Activated CD4-positive, alpha-beta memory T cell treated with anti-CD3 and anti-CD28 coated beads for 36 hours (primary cell): ENCODE measurements at regions of chr6 and their contacts with region 1.

Region 1: DNA sequence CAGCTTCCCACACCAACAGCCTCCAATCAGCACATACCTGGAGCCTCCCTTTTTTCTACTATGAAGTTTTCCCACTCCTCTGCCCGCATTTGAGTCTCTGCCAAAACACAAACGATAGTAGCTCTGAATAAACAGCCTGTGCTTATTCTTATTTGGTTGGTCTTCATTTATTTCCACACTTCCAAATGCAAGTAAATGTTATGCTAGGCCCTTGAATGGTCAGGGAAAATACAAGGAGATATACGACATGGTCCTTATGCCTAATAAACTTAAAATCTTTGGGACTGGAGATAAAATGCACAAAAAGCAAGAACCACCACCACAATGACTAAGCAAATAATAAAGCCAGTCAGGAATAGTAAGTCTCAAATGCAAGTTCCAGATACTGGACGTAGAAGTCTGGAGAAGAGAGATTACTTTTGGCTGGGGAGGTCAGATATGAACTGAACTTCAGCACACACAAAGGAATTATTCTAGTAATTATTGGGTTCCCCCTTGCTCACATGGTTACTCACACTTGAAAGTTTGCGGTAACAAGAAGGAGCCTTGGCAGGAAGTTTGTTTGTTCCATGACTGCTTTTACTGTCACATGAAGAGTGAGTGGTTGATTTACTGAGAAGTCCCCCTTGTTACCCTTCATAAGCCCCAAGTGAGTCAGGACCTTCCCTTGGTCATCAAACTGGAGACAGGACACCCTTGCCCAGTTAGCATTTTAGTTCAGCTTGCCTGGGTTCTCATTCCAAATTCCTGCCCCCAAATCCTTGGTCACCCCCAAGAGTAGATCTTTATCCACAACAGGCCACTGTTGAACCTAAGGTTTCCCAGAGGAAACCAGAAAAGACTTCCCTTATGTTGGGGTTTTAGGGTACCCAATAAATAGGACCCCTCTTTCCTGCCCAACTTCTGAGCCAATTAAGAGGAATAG is 511.2 kb upstream of the JARID2 start:
- DNase-seq: peak; percentile 67
- H3K4me3 Mint-ChIP-seq: peak overlapping the region; percentile 73
- H3K27ac Mint-ChIP-seq: peak overlapping the region; percentile 100
- H3K4me1 Mint-ChIP-seq: peaks cover 98% of the 10 kb centered on the region
- H3K27me3 Mint-ChIP-seq: no peaks in the 10 kb centered on the region

Region 2: DNA sequence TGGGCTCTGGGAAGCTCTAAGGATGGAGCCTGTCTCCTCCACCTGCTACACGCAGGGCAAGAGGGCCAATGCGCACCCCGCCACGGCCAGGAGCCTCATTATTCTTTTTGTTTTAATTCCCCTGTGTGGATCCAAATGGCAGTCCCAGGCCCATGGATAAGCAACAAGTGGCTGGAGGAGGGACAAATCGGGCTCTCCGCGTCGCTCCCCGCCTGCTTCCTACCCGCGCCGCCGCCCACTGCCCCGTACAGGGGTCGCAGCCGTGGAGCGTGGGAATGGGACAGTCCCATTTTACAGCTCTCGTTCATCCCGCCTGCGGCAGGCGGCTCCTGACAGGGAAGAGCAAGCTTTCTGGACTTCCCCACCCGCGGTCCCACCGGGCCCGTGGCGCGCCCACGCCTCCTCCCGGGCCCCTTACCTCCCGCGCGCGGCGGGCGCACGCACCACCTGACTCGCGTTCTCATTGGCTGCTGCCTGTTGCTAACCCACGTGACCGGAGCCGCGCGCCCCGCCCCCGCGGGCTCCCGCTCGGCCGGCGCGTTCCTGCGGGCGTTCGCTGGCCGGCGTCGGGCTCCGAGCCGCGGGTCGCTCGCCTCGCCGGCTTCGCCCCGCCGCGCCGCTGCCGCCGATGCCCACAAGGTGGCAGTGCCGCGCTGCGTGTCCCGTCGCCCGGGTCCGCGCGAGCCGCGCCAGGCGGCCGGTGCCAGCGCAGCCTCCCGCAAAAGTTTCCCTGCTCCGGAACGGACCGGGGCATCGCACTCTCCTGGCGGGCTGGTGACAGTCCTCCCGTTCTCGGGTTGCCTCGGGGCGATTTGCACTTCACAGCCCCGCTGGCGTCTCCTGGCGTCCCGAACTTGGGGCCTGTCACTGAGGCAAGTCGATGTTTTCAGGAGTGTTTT is 523.8 kb before region 1 on chr6:
- CTCF ChIA-PET with region 1: no interaction called
- POLR2A ChIA-PET with region 1: no interaction called
- intact Hi-C with region 1: loop called (anchors 1 kb)
- DNase-seq: peak; percentile 94
- H3K4me3 Mint-ChIP-seq: peak overlapping the region; percentile 74
- H3K27ac Mint-ChIP-seq: peak overlapping the region; percentile 85
- H3K4me1 Mint-ChIP-seq: peaks cover 17% of the 10 kb centered on the region
- H3K27me3 Mint-ChIP-seq: no peaks in the 10 kb centered on the region

Region 3: GRCh38 chr6:14542670-14543366 is 191.9 kb before region 1 on chr6:
- CTCF ChIA-PET with region 1: interaction called, 4 read pairs
- POLR2A ChIA-PET with region 1: no interaction called
- intact Hi-C with region 1: loop called (anchors 2 kb)
- DNase-seq: peak; percentile 90
- H3K4me3 Mint-ChIP-seq: no peak overlapping the region
- H3K27ac Mint-ChIP-seq: peak overlapping the region; percentile 53
- H3K4me1 Mint-ChIP-seq: peaks cover 31% of the 10 kb centered on the region
- H3K27me3 Mint-ChIP-seq: peaks cover 2% of the 10 kb centered on the region

Region 4: DNA sequence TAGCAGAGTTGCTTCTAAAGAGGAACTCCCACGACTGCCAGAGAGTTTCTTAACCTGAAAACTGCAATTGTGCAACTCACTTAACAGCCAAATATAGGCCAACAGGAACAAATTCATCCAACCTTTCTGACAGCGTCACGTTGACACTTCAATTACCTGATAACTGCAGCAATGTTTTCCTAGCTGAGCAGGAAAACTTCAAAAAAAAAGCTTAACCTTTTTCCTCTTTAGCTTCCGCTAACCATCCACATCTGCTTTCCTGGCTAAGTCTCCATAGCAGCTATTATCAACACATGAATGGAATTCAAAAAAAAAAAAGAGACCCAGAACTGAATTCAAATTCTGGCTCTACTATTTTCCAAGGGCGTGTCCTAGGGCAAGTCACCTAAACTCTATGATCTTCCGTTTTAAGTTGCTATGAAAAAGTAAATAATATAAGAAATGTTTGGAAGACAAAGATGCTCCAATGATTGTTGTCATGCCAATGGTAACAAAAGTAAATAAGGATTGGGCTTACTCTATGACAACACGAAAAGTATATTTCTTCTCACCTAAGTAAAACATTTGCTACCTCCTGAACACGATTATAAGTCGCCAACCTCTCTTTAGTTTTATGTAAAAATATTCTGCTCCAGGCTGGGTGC is 13.5 kb before region 1 on chr6:
- CTCF ChIA-PET with region 1: interaction called, 5 read pairs
- POLR2A ChIA-PET with region 1: interaction called, 125 read pairs
- intact Hi-C with region 1: loop called (anchors 1 kb)
- DNase-seq: no peak
- H3K4me3 Mint-ChIP-seq: no peak overlapping the region
- H3K27ac Mint-ChIP-seq: peak overlapping the region; percentile 71
- H3K4me1 Mint-ChIP-seq: peaks cover 65% of the 10 kb centered on the region
- H3K27me3 Mint-ChIP-seq: no peaks in the 10 kb centered on the region

Region 5: GRCh38 chr6:14883921-14884320 is 149.2 kb after region 1 on chr6:
- CTCF ChIA-PET with region 1: no interaction called
- POLR2A ChIA-PET with region 1: no interaction called
- intact Hi-C with region 1: no loop called
- DNase-seq: no peak
- H3K4me3 Mint-ChIP-seq: no peak overlapping the region
- H3K27ac Mint-ChIP-seq: no peak overlapping the region
- H3K4me1 Mint-ChIP-seq: peaks cover 6% of the 10 kb centered on the region
- H3K27me3 Mint-ChIP-seq: no peaks in the 10 kb centered on the region

Region 6: DNA sequence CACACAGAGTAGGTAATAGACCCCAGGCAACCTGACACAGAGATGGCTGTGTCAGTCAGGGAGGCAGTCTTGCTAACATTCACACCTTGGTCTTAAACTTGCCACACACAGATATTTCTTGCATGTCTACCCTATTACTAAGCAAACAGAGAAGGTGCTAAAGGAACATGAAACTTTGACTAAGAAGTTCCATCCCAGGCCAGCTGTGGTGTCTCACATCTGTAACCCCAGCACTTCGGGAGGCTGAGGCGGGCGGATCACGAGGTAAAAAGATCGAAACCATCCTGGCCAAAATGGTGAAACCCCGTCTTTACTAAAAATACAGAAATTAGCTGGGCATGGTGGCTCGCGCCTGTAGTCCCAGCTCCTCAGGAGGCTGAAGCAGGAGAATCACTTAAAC is 288.8 kb after region 1 on chr6:
- CTCF ChIA-PET with region 1: no interaction called
- POLR2A ChIA-PET with region 1: no interaction called
- intact Hi-C with region 1: loop called (anchors 1 kb)
- DNase-seq: peak; percentile 89
- H3K4me3 Mint-ChIP-seq: peak overlapping the region; percentile 41
- H3K27ac Mint-ChIP-seq: peak overlapping the region; percentile 96
- H3K4me1 Mint-ChIP-seq: peaks cover 35% of the 10 kb centered on the region
- H3K27me3 Mint-ChIP-seq: peaks cover 3% of the 10 kb centered on the region

Region 7: DNA sequence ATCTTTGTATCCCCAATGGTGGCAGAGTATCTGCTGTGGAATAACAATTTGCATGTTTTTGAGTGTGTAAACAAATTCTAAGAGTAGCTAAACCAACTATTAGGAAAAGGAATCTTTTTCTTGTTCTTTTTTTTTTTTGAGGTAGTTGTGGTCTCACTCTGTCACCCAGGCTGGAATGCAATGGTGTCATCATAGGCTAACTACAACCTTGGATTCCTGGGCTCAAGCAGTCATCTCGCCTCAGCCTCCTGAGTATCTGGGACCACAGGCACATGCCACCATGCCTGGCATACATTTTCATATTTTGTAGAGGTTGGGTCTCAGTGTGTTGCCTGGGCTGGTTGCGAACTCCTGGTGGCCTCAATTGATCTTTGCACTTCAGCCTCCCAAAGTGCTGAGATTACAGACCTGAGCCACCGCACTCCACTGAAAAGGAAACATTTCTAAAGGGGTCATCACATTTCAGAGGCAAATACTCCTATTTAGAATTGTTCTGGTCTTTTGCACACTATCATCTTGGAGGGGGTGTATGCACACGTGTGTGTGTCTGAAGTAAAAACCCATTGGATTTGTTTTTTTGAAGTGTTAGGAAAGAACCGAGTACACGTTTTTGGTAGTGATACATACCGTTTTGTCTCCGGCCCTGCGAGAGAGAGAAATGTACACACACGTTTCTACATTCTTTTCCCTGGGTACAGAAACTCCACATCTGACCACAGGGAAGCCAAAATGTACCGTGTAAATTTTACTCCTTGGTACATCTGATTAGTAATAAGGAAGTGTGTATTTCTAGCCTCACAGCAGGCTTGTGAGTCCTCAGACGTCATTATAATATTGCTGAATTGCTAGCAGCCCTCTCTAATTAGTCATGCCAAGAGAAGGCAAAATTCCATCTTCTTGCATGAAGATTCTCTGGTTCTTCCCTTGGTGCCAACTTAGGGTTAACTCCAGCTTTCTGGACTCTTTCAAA is 694.7 kb after region 1 on chr6:
- CTCF ChIA-PET with region 1: no interaction called
- POLR2A ChIA-PET with region 1: no interaction called
- intact Hi-C with region 1: loop called (anchors 10 kb)
- DNase-seq: no peak
- H3K4me3 Mint-ChIP-seq: no peak overlapping the region
- H3K27ac Mint-ChIP-seq: no peak overlapping the region
- H3K4me1 Mint-ChIP-seq: peaks cover 80% of the 10 kb centered on the region
- H3K27me3 Mint-ChIP-seq: no peaks in the 10 kb centered on the region

Region 8: GRCh38 chr6:16690608-16691198 is 1956.0 kb after region 1 on chr6:
- CTCF ChIA-PET with region 1: no interaction called
- POLR2A ChIA-PET with region 1: no interaction called
- intact Hi-C with region 1: loop called (anchors 10 kb)
- DNase-seq: peak; percentile 82
- H3K4me3 Mint-ChIP-seq: peak overlapping the region; percentile 51
- H3K27ac Mint-ChIP-seq: peak overlapping the region; percentile 90
- H3K4me1 Mint-ChIP-seq: peaks cover 93% of the 10 kb centered on the region
- H3K27me3 Mint-ChIP-seq: no peaks in the 10 kb centered on the region